ENCODE measurements at regions of chrX and their contacts with region 1.

Region 1: GRCh38 chrX:108224727-108225621 is 133.4 kb downstream of the ATG4A start:
- DNase-seq: peak; percentile 23
- CTCF ChIP-seq: peak; percentile 75

Region 2: DNA sequence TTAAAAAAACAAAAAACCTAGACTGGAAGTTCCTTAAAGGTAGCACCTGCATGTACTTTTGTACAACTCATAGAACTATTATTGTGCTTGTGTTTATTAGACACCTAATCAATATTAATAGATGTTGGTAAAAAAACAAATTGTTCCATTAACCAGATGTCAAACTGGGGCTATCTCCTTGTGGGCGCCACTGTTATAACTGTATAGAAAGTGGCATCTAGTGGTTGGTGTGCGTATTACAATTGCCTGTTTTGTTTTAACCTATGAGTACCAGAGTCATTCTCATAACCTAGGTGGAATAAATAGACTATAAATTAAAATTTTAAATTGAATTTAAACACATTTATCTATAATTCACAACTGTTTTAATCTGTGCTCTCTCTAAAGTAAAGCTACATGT is 312.0 kb after region 1 on chrX:
- in situ Hi-C with region 1: loop called (anchors 25 kb)
- DNase-seq: peak; percentile 26
- CTCF ChIP-seq: peak; percentile 67

Measured in GM13977 (cell line).